PC-3 (cell line): ENCODE measurements at regions of chr15 and their contacts with region 1.

Region 1: DNA sequence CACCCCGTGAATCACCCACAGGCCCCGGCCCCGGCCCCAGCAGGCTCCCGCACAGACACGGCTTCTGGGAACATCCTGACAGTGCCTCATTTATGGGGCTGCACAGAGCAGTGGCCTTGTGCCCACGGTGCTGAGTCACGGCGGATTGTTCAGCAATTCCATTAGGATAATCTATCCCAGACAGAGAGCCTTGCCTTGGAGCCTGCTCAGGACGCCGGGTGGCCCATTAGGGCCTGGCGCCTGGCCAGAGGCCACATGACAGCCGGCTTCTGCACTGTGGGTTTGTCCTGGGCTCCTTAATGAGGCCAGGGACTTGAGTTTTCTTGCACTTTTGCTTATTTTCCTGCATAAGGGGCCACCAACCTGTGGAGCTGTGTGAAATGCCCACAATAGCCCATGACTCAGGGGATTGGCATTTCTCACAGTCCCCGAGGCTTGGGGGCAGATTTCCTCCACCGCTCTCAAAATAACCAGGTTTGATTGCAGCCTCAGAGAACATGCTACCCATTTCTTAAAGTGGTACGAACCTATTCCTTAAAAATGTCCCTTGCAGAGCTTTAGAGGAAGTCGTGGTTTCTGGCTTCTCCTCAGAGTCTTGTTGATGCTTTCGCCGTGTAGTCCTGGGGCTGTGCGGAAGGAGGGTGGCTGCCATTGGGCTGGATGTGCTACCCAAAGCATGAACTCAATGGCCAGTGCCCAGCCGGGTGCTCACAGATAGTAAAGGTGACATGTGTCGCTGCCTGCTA is 19.0 kb downstream of the SYNM start:
- DNase-seq: peak; percentile 96
- ATAC-seq: peak; percentile 91
- H3K4me3 ChIP-seq: peak overlapping the region; percentile 59; the same call in 1 of the 2 replicates
- H3K27ac ChIP-seq: peak overlapping the region; percentile 96
- H3K4me1 ChIP-seq: peaks cover 27% of the 10 kb centered on the region
- H3K27me3 ChIP-seq: no peaks in the 10 kb centered on the region
- CTCF ChIP-seq: no peak

Region 2: GRCh38 chr15:99104788-99105513 is 18.9 kb before region 1 on chr15 and contains the start of gene SYNM:
- CTCF ChIA-PET with region 1: interaction called, 3 read pairs
- POLR2A ChIA-PET with region 1: no interaction called
- intact Hi-C with region 1: loop called (anchors 1 kb)
- DNase-seq: peak; percentile 89
- ATAC-seq: peak; percentile 87
- H3K4me3 ChIP-seq: peak within 1 kb of the TSS; percentile 79
- H3K27ac ChIP-seq: no peak within 1 kb of the TSS
- H3K4me1 ChIP-seq: peaks cover 15% of the 10 kb centered on the region; the same call in 1 of the 2 replicates
- H3K27me3 ChIP-seq: no peaks in the 10 kb centered on the region
- CTCF ChIP-seq: peak; percentile 79
- total RNA-seq, gene SYNM: 9.9 and 15.6 TPM in 2 replicates

Region 3: GRCh38 chr15:99213187-99213811 is 89.4 kb after region 1 on chr15:
- CTCF ChIA-PET with region 1: no interaction called
- POLR2A ChIA-PET with region 1: no interaction called
- intact Hi-C with region 1: loop called (anchors 1 kb)
- DNase-seq: peak; percentile 78
- ATAC-seq: peak; percentile 79
- H3K4me3 ChIP-seq: no peak overlapping the region
- H3K27ac ChIP-seq: no peak overlapping the region
- H3K4me1 ChIP-seq: no peaks in the 10 kb centered on the region
- H3K27me3 ChIP-seq: no peaks in the 10 kb centered on the region
- CTCF ChIP-seq: peak; percentile 92